ENCODE measurements at regions of chr9 and their contacts with region 1.

Region 1: DNA sequence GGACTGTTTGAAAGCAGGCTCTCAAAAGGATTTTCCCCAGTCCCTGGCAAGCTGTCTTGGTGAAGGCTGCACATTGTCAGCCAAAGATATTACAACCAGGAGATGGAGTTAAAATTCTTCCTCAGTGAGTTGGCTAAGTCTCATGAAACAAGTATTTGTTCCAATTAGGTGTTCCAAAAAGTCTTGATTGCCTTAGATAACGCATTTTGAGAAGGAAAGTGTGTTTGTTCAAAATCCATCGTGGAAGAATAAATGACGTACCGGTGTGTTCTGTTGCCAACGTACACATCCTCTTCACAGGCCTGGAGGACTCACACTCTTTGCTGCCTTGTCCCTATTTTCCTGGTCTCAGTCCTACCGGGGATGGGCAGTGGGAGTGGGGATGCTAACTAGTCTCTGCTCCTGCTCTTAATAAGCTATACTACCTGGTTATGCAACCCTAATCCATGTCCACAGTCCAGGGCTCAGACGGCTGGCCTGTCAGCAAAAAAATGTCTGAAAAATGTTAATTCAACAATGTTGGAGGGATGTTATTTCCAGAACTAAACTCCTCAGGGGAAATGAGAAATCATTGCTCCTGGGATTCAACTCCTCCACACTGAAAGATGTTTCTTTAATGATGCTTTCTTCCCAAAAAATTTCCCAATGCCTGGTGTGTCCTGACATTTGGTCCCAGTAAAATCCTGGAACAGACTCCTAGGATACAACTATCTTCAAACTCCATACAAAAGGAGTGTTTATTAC is 175.3 kb upstream of the KLF9 start:
- DNase-seq: no peak
- ATAC-seq: no peak
- H3K4me3 ChIP-seq: no peak overlapping the region
- H3K4me3 Mint-ChIP-seq: no peak overlapping the region
- H3K27ac ChIP-seq: no peak overlapping the region
- H3K27ac Mint-ChIP-seq: no peak overlapping the region
- H3K4me1 ChIP-seq: no peaks in the 10 kb centered on the region
- H3K4me1 Mint-ChIP-seq: no peaks in the 10 kb centered on the region
- H3K27me3 ChIP-seq: no peaks in the 10 kb centered on the region
- H3K27me3 Mint-ChIP-seq: no peaks in the 10 kb centered on the region
- CTCF ChIP-seq: no peak

Region 2: DNA sequence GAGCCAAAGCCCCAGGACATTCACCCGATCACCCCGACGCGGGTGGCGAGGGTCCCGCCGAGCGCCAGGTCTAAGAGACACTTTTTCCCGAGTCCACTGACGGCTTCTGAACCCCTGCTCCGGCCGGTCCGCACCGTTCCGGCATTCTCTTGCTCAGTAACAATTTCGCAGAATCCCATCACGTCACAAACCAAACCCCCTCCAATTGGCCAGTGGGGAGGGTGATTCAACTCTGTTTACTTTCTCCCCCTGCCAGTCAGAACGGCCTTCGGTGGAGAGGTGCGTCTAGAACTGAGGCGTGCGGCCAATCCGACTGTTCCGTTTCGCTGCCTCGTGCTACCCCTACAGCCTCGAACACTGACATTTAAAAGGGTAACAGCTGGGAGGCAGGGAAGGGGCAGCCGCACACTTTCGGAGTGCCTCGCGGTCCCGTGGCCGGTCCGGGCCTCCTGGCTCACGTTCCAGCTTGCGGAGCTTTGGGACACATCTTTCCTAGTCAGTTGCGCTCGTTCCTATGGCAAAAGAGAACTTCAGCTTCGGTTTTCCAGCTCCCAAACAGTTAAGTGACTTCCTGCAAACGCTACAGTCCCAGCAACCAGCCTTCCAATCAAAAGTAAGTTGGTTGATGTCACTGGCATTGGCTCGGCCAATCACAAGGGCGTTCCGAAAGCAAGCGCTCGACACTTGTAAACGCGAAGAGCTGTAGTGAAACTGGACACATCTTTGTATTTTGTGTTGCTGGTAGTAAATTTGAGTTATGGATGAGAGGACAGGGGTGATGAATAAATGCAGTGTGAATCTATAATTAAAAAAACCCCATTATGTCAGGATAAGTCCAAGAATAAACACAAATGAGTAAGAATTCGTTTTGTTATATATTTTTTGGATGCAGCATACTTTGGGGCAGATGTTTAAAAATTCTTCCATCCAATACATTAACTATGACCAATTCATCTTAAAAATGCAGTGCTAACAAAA is 175.7 kb before region 1 on chr9 and contains the start of gene KLF9:
- CTCF ChIA-PET with region 1: no interaction called
- POLR2A ChIA-PET with region 1: no interaction called
- intact Hi-C with region 1: no loop called
- DNase-seq: peak; percentile 81 to 98 (median 86)
- ATAC-seq: peak; percentile 80
- H3K4me3 ChIP-seq: peak within 1 kb of the TSS; percentile 93
- H3K4me3 Mint-ChIP-seq: peak within 1 kb of the TSS; percentile 98
- H3K27ac ChIP-seq: peak within 1 kb of the TSS; percentile 97 to 99
- H3K27ac Mint-ChIP-seq: peak within 1 kb of the TSS; percentile 100
- H3K4me1 ChIP-seq: peaks cover 46% of the 10 kb centered on the region
- H3K4me1 Mint-ChIP-seq: peaks cover 60% of the 10 kb centered on the region
- H3K27me3 ChIP-seq: no peaks in the 10 kb centered on the region
- H3K27me3 Mint-ChIP-seq: no peaks in the 10 kb centered on the region
- CTCF ChIP-seq: no peak
- total RNA-seq, gene KLF9: 132 to 135 TPM

Region 3: DNA sequence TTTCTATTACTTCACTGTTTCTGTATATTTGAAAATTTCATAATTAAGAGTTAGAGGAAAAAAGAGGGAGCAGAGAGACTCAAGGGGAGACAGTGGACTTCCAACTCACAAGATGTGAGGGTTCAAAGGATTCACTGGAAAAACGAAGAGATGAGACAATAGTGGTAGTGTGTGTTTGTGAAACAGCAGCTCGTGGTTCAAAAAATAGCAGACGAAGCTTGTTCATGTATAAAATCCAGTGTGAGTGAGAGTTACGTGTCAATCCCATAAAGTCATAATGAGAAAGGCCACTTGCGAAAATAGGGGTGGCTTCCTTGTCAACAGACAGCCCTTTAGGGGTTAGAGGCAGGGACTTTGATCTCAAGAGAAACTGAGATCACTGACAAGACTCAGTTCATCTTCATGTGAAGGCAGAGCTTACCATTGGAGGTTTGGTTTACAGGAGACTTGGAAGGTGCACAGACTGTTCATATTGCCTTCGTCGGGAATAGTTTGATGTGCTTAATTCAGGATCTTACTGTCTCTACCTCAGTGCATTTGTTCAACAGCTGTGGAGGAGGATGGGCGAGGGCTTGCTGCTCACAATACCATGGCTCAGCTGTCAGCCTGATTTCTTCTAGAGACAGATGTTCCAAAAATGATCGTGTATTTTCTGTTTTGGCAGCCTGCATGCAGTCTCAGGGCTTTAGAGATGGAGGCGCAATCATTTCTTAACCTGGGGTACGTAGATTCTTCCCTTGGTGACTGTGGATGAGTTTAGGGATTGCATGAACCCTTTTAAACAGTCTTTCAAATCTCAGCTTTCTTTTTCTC is 69.6 kb before region 1 on chr9:
- CTCF ChIA-PET with region 1: no interaction called
- POLR2A ChIA-PET with region 1: no interaction called
- intact Hi-C with region 1: loop called in 1 of 2 experiments (anchors 5 kb)
- DNase-seq: no peak
- ATAC-seq: no peak
- H3K4me3 ChIP-seq: no peak overlapping the region
- H3K4me3 Mint-ChIP-seq: no peak overlapping the region
- H3K27ac ChIP-seq: no peak overlapping the region
- H3K27ac Mint-ChIP-seq: no peak overlapping the region
- H3K4me1 ChIP-seq: no peaks in the 10 kb centered on the region
- H3K4me1 Mint-ChIP-seq: peaks cover 11% of the 10 kb centered on the region
- H3K27me3 ChIP-seq: no peaks in the 10 kb centered on the region
- H3K27me3 Mint-ChIP-seq: no peaks in the 10 kb centered on the region
- CTCF ChIP-seq: no peak

Measured in CD4-positive, alpha-beta T cell (primary cell).